ENCODE measurements at regions of chr5 and their contacts with region 1.

Region 1: GRCh38 chr5:81851481-81852178 is 100.7 kb upstream of the SSBP2 start:
- DNase-seq: peak; percentile 97
- H3K4me3 ChIP-seq: peak overlapping the region; percentile 41 to 65 (median 50)
- H3K27ac ChIP-seq: peak overlapping the region; percentile 85 to 97 (median 90)
- H3K4me1 ChIP-seq: peaks cover 15 to 50% (median 32%) of the 10 kb centered on the region in 4 donors
- H3K27me3 ChIP-seq: no peaks in the 10 kb centered on the region
- CTCF ChIP-seq: no peak
- EP300 ChIP-seq: peak; percentile 3
- POLR2A ChIP-seq: peak; percentile 62

Region 2: GRCh38 chr5:81506900-81507588 is 344.6 kb before region 1 on chr5:
- in situ Hi-C with region 1: loop called (anchors 10 to 25 kb)
- intact Hi-C with region 1: loop called (anchors 5 kb)
- DNase-seq: peak; percentile 48
- H3K4me3 ChIP-seq: no peak overlapping the region
- H3K27ac ChIP-seq: peak overlapping the region in 3 of 4 donors; percentile 9 to 50 (median 38)
- H3K4me1 ChIP-seq: peaks cover 0 to 13% (median 2%) of the 10 kb centered on the region in 4 donors
- H3K27me3 ChIP-seq: no peaks in the 10 kb centered on the region
- CTCF ChIP-seq: peak; percentile 77 to 86 (median 81)
- EP300 ChIP-seq: no peak
- POLR2A ChIP-seq: no peak

Region 3: DNA sequence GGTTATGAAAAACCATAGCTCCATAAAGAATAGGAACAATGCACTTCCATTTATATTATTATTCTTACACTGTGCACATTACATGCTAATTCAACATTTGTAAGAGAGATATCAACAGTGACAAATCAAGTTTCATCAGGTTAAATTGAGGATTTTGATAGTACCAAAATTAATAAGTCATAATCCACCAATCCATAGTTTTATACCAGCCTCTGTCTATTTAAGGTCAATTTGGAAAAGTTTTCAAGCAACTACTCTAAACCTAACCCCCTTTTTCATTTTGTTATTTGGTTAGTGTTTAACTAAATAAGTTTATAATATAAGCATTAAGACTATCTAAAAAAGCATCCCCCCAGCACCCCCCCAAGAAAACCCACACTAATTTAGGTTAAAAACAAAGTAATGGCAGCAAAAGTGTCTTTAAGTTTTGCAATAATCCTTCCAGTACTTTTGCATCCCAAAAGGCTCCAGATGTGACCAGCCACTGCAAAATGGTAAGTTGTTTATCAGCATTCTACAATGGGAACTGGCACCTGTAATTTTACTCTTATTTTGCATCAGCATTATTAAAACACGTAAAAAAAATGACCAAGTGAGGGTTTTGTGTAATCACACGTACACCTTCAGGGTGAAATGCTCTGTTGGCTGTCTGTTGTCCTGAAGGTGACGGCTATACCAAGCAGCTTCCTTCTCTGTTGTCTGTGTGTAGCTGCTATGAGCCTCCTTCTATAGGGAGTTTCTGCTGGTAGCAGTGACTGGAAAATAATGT is 64.0 kb before region 1 on chr5:
- in situ Hi-C with region 1: loop called in 1 of 4 experiments (anchors 5 kb)
- intact Hi-C with region 1: loop called (anchors 2 kb)
- DNase-seq: peak; percentile 55
- H3K4me3 ChIP-seq: no peak overlapping the region
- H3K27ac ChIP-seq: peak overlapping the region; percentile 23 to 66 (median 46)
- H3K4me1 ChIP-seq: peaks cover 8 to 24% (median 14%) of the 10 kb centered on the region in 4 donors
- H3K27me3 ChIP-seq: no peaks in the 10 kb centered on the region
- CTCF ChIP-seq: no peak
- EP300 ChIP-seq: no peak
- POLR2A ChIP-seq: no peak

Region 4: GRCh38 chr5:81971712-81972495 is 120.3 kb after region 1 on chr5 and contains the start of gene ATG10:
- in situ Hi-C with region 1: no loop called
- intact Hi-C with region 1: loop called (anchors 5 kb)
- DNase-seq: peak; percentile 92
- H3K4me3 ChIP-seq: peak within 1 kb of the TSS; percentile 53 to 81 (median 61)
- H3K27ac ChIP-seq: peak within 1 kb of the TSS; percentile 94 to 98 (median 97)
- H3K4me1 ChIP-seq: peaks cover 0 to 14% (median 3%) of the 10 kb centered on the region in 4 donors
- H3K27me3 ChIP-seq: no peaks in the 10 kb centered on the region
- CTCF ChIP-seq: no peak
- EP300 ChIP-seq: no peak
- POLR2A ChIP-seq: peak; percentile 94
- total RNA-seq, gene ATG10: 8.4 to 10.6 TPM in 2 of 4 donors, not detected in the others

Region 5: DNA sequence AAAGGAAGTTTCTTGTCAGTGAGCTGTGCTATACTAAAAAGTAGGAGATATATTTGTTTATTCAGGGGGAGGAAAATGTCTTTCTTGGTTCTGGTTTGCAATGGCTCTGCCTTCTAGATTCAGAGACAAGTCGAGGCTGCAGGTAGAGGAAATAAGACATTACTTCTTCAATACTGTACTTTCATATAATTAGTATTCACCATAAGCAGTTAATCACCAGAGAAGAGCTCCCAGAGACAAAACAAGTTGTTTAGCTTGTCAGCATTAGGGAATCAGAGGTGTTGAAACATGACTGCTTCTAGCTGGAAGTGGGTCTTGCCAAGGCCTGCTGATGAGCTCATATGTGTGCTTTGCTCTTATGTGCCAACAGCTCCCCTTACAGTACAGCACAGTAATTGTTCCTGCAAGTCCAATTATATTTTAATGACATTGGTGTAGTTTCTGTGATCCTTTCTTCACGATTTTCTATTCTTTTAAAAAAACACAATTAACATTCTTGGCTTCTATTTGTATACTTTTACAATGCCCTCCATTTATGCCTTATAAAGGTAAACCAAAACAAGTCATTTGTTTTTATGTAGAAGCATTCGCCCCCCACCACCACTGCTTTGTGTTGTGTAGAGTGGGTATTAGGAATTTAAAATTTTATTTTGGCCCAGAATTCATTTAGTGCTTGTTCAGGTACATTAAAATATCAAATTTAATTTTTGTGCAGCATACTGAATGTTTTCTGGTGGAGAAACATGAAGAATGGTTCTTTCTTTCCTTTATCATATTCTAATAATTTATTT is 314.3 kb after region 1 on chr5:
- in situ Hi-C with region 1: loop called in 1 of 4 experiments (anchors 10 kb)
- intact Hi-C with region 1: loop called (anchors 5 kb)
- DNase-seq: peak; percentile 61
- H3K4me3 ChIP-seq: no peak overlapping the region
- H3K27ac ChIP-seq: peak overlapping the region; percentile 45 to 65 (median 56)
- H3K4me1 ChIP-seq: peaks cover 4 to 26% (median 8%) of the 10 kb centered on the region in 4 donors
- H3K27me3 ChIP-seq: no peaks in the 10 kb centered on the region
- CTCF ChIP-seq: peak; percentile 65 to 69 (median 68)
- EP300 ChIP-seq: no peak
- POLR2A ChIP-seq: no peak